Body of pancreas (tissue), 4 donors: ENCODE measurements at regions of chr17 and their contacts with region 1.

Region 1: GRCh38 chr17:41801374-41802271 is 10.1 kb downstream of the P3H4 start:
- DNase-seq: peak; percentile 83 to 90 (median 86)
- ATAC-seq: peak; percentile 89
- H3K4me3 ChIP-seq: no peak overlapping the region
- H3K27ac ChIP-seq: no peak overlapping the region
- H3K4me1 ChIP-seq: peaks cover 10% of the 10 kb centered on the region
- H3K27me3 ChIP-seq: no peaks in the 10 kb centered on the region
- CTCF ChIP-seq: peak; percentile 91 to 97 (median 95)
- POLR2A ChIP-seq: no peak

Region 2: DNA sequence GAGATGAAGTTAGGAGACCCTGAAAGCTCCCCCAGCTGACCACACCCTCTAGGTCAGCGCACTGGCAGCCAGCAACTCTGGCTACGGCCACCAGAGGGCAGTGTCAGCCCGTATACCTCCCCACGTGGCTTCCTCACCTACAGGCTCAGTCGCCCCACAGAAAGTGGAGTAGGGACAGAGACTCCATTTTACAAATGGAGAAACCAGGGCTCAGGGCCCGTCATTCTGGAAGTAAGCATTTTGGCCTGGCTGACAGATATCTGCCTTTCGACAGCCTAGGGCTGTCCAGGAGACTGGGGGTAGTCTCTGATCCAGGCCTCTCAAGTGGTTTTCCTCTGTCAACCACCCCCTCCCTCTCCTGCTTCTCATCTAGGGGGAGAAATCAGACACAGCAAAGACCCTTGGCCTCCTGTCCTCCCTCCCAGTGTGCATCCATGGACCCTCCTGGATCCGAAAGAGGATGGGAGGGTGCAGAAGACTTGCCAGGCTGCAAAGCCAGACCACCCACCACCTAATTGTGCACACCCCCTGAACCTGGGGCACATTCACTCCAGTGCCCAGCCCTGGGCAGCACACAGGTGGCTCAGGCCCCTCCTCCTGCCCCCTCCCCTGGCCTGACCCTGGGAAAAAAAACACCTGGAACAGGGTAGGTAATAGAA is 63.4 kb before region 1 on chr17:
- intact Hi-C with region 1: loop called (anchors 2 kb)
- DNase-seq: peak; percentile 86 to 90 (median 86)
- ATAC-seq: peak; percentile 87
- H3K4me3 ChIP-seq: no peak overlapping the region
- H3K27ac ChIP-seq: peak overlapping the region in 2 of 4 donors; percentile 51 to 68
- H3K4me1 ChIP-seq: peaks cover 38% of the 10 kb centered on the region
- H3K27me3 ChIP-seq: peaks cover 4 to 18% of the 10 kb centered on the region in 2 donors
- CTCF ChIP-seq: peak; percentile 93 to 98 (median 97)
- POLR2A ChIP-seq: no peak